Right cardiac atrium (tissue), 5 donors: ENCODE measurements at regions of chr9 and their contacts with region 1.

Region 1: DNA sequence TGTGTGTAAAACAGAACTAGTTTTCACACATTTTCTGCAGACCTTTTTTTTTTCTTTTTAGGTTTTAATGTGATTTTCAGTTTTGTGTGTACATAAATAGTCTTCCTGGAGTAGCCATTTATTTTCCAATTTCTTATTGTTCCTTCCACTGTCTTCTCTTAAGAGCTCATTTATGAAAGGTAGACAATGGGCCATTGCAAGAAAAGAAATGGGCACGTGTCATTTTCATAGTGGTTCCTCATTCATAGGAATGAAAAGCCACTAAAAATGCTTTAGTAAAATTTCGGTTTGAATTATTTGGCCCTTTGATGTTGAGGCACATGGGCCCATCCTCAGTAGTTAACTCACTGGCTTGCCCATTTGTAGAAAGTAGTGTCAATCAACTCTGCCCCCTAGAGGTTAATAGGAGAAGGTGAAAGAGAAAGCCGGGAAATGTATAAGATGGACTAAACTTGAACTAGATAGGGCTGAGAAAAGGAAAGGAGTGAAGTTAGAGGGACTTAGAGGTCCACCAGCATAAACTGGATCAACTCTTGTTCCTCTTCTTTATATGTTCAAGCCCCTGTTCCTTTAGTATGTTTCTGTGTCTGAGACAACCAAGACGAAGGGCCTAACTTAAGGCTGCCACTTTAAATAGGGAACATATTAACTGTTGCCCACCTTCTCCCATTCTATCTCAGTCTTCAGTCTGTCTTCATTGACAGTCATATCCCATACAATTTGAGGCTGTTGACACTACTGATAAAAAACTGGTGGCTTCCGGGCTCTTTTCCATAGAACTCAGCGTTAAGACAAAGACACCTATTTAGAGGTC is 72.6 kb downstream of the SMARCA2 start:
- DNase-seq: no peak
- ATAC-seq: peak in 1 of 2 donors; percentile 39
- H3K4me3 ChIP-seq: no peak overlapping the region
- H3K27ac ChIP-seq: no peak overlapping the region
- H3K4me1 ChIP-seq: no peaks in the 10 kb centered on the region
- H3K27me3 ChIP-seq: no peaks in the 10 kb centered on the region

Region 2: DNA sequence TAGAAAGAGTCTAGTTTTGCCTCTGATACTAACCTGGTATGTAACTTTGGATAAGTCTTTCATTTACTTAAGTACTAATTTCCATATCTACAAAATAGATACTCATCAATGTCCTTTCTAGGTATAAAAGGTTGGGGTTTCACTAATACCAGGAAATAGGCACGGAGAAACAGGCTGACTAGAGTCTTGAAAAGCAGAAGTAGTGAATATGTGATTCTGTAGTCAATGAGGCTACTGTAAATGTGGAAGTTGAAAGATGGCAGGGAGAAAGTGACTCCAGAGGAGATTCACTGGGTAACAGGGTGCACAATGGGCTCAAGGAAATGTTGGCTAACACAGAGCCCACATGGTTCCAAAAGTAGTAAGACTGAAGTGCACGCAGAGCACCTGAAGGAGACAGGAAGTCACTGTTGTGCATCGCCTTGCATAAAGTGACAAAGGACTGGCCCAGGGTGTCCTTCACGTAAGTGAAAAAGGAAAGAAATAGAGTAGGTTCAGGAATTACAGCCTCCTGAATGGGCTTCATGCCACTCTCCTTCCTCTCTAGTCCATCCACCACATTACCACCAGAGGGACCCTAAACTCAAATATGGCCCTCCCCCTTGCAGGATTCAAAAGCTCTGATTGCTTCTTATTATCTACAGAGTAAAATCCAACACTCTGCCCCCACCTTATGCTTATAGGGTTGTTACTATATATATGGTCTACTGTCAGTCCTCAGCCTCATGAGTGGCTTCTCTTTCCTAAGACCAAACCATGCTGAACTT is 360.5 kb before region 1 on chr9:
- intact Hi-C with region 1: loop called in 1 of 4 experiments (anchors 10 kb)
- DNase-seq: no peak
- ATAC-seq: no peak
- H3K4me3 ChIP-seq: no peak overlapping the region
- H3K27ac ChIP-seq: no peak overlapping the region
- H3K4me1 ChIP-seq: no peaks in the 10 kb centered on the region
- H3K27me3 ChIP-seq: no peaks in the 10 kb centered on the region

Region 3: GRCh38 chr9:2014696-2015580 is 72.8 kb before region 1 on chr9 and contains the start of gene SMARCA2:
- intact Hi-C with region 1: loop called in 1 of 4 experiments (anchors 10 kb)
- DNase-seq: peak; percentile 98 to 99 (median 99)
- ATAC-seq: peak; percentile 95
- H3K4me3 ChIP-seq: peak within 1 kb of the TSS; percentile 97
- H3K27ac ChIP-seq: peak within 1 kb of the TSS; percentile 91
- H3K4me1 ChIP-seq: no peaks in the 10 kb centered on the region
- H3K27me3 ChIP-seq: no peaks in the 10 kb centered on the region
- total RNA-seq, gene SMARCA2: 99.6 to 133 (median 112) TPM